Activated T-helper 2 cell treated with anti-CD3 and anti-CD28 coated beads, Interferon-gamma antibody, Interleukin-2, Interleukin-4, amounts not matched to agents 10 μg/mL and 5 μg/mL and 100 μg/mL, durations not matched to agents 14 hours and 24 hours and 36 hours (primary cell): ENCODE measurements at regions of chr19 and their contacts with region 1.

Region 1: DNA sequence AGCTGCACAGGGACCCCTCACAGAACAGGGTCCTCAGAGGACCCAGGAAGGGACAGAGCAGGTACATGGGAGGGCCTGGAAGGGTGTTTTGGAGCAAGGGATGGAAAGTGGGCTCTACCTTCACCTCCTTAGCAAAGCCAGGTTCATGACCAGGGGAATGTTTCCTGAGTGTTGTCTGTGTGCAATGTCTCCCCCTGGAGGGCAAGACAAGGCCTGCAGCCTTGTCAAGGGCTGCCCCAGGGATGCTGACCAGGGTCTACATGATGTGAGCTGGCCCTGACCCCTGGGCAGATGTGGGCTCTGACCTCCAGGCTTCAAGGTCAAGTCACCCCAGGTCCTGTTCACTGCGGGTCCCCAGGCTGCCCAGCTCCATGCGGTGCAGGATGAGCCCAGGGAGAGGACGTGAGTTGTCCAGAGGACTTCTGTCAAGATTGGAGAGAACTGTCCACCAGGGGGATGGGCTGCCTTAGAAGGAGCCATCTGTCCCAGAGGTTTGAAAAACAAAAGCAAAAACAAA is 1.0 kb upstream of the CEACAM1 start:
- DNase-seq: peak; percentile 61
- H3K4me3 Mint-ChIP-seq: peak overlapping the region; percentile 90
- H3K27ac Mint-ChIP-seq: peak overlapping the region; percentile 95
- H3K4me1 Mint-ChIP-seq: peaks cover 38% of the 10 kb centered on the region
- H3K27me3 Mint-ChIP-seq: no peaks in the 10 kb centered on the region

Region 2: DNA sequence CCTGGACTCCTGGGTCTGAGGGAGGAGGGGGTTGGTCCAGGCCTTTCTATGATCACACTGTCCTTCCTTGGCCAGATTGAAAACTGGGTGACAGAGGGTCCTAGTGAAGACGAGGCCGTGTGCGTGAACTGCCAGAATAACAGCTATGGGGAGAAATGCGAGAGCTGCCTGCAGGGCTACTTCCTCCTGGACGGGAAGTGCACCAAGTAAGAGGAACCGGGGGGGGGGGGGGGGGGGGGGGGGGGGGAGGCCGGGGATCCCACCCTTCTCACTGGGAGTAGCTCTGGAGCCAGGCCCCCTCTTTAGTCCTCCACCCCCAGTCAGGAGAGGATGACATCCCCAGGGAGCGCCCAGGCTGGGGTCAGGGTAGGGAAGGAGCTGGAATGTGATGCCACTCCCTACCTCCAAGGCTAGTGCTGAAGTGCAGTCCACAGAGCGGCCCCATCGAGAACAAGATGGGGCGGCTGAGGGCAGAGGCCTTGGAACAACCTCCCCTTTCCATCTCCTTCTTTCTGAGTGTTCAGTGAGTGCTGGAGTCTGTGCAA is 158.6 kb before region 1 on chr19:
- intact Hi-C with region 1: no loop called
- DNase-seq: no peak
- H3K4me3 Mint-ChIP-seq: no peak overlapping the region
- H3K27ac Mint-ChIP-seq: no peak overlapping the region
- H3K4me1 Mint-ChIP-seq: no peaks in the 10 kb centered on the region
- H3K27me3 Mint-ChIP-seq: no peaks in the 10 kb centered on the region

Region 3: DNA sequence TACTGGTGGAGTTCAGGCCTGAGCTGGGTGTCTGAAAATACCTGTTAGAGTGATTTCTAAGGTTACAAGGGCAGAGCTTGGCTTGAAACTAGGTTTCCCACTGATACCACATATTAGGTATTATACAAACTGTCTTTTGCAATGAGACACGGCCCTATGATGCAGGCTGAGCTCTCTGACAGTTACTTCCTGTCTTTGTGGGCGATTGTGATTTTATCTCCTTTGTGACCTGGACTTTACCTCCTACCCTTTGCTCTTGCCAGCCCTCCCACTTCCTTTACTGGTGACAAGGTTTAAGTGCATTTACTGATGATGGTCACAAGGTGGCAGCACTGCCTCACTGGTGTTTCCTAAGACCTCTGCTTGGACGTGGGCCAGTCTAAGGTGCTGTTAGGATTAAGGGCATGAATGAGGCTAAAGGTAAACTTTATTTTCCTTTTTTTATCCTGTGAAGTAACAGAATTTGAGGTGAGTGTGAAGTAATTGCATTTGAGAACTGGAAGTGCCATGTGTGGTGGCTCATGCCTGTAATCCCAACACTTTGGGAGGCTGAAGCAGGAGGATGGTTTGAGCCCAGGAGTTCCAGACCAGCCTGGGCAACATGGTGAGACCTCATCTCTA is 78.9 kb before region 1 on chr19:
- intact Hi-C with region 1: loop called (anchors 1 kb)
- DNase-seq: peak; percentile 77
- H3K4me3 Mint-ChIP-seq: no peak overlapping the region
- H3K27ac Mint-ChIP-seq: no peak overlapping the region
- H3K4me1 Mint-ChIP-seq: peaks cover 26% of the 10 kb centered on the region
- H3K27me3 Mint-ChIP-seq: no peaks in the 10 kb centered on the region